GM18951 (cell line): ENCODE measurements at regions of chr7 and their contacts with region 1.

Region 1: DNA sequence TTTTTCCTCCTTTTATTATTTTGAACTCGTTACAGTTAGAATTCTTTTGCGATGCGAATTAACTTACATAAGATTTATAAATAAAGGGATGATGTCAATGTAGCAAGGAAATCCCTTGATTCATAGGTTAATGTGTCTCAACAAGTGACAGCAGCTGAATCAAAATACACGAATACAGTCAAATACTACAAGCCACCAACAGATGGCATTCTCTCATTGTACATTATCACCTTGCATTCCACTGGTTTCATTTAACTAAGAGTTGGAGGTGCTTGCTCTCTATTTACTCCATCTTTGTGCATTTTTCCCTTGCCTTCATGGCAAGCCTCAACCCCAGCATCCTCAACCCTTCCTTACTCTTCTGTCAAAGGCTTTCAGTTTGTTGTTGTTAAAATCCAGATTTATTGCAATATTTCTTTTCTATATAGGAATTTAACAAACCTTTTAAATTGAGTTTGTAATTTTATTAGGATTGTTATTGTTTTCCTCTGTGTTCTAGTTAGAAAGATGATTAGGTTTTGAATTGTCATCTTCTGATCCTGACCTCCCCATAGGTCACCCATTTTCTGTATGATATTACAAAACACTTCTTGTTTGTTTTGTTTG is 78.3 kb downstream of the SLC25A40 start:
- POLR2A ChIP-seq: no peak

Region 2: DNA sequence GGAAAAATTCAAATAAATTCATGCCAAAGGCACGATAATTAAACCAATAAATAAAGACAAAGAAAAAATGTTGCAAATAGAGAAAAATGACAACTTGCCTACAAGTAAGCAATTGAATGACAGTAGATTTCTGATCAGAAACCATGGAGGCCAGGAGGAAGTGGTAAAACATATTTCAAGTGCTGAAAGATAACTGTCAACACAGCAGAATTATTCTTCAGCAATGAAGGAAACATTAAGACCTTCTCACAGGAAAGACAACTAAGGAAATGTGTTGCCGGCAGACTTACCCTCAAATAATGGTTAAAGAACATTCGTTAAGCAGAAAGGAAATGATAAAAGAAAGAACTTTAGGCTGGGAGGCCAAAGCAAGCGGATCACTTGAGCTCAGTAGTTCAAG is 139.3 kb before region 1 on chr7:
- in situ Hi-C with region 1: no loop called
- POLR2A ChIP-seq: no peak

Region 3: DNA sequence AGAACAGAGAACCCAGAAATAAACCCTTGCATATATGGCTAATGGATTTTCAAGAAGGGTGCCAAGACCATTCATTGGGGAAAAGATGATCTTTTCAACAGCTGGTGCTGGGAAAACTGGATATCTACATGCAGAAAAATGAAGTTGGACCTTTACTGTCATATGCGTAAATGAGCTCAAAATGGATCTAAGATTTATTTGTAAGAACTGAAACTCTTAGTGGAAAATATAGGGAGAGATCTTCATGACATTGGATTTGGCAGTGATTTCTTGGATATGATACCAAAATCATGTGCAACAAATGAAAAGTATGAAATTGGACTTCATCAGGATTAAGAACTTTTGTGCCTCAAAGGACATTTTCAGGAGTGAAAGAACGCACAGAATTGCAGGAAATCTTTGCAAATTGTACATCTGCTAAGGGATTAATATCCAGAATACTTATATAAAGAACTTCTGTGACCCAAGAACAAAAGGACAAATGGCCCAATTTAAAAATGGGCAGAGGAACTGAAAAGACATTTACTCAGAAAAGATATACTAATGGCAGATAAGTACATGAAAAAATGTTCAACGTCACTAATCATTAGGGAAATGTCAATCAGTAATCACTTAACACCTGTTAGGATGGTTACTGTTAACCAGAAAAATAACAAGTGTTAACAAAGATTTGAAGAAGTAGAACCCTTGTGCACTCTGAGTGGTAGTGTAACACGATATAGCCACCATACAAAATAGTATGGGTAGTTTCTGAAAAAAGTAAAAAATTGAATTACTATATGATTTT is 84.4 kb after region 1 on chr7:
- in situ Hi-C with region 1: loop called (anchors 5 kb)
- POLR2A ChIP-seq: no peak

Region 4: GRCh38 chr7:88111136-88111743 is 313.3 kb after region 1 on chr7:
- in situ Hi-C with region 1: loop called (anchors 5 kb)
- POLR2A ChIP-seq: no peak